Activated T-helper 1 cell treated with anti-CD3 and anti-CD28 coated beads, Interleukin-12 subunit alpha, Interleukin-12 subunit beta, Interleukin-2, Interleukin-4 antibody, amounts not matched to agents 30 ng/mL and 10 ng/mL and 1 ng/mL, durations not matched to agents 14 hours and 24 hours and 36 hours (primary cell): ENCODE measurements at regions of chr4 and their contacts with region 1.

Region 1: DNA sequence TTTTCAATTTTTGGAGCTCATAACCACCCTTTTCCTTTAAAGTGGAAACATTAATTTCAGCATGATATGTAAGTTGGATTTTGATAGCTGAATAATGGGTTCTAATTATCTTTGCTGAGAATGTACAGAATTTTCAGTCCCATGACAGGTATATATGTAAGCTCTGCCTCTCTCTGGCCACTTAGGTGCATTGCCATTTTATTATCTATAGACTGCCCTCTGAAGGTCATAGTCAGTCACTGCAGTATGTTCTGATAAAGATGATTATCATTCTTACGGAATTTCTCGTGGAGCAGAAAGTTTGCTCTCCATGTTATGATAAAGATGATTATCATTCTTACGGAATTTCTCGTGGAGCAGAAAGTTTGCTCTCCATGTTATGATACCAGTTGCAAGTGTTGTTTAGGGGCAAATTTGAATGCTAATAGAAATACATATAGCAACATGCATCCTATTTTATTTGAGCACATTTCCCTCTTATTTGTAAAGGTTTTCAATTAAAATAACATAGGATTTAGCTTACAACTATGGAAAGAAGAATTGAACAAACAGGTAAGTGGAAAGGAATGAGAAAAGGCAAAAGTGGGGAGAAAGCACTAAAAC is 10.4 kb downstream of the AFP start:
- DNase-seq: no peak
- H3K4me3 Mint-ChIP-seq: no peak overlapping the region
- H3K27ac Mint-ChIP-seq: no peak overlapping the region
- H3K4me1 Mint-ChIP-seq: no peaks in the 10 kb centered on the region
- H3K27me3 Mint-ChIP-seq: peaks cover under 1% of the 10 kb centered on the region

Region 2: DNA sequence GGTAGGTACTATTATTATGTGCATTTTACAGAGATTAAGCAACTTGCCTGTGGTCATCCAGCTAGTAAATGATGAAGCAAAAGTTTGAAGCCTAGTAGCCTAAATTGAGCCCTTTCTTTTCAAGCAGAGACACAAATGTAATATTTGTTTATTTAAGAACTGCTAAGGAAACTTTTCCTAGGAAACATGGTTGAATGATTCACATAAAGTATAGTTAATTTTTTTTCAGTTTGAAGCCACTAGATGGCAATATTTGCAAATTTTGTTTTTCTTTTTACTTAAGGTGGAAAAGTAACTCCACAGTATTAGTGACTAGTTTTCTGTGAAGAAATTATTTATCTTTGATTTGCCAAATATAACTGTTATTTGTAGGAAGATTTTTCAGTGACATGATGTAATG is 135.0 kb before region 1 on chr4:
- intact Hi-C with region 1: loop called (anchors 1 kb)
- DNase-seq: no peak
- H3K4me3 Mint-ChIP-seq: no peak overlapping the region
- H3K27ac Mint-ChIP-seq: no peak overlapping the region
- H3K4me1 Mint-ChIP-seq: no peaks in the 10 kb centered on the region
- H3K27me3 Mint-ChIP-seq: no peaks in the 10 kb centered on the region